MCF 10A (cell line): ENCODE measurements at regions of chr5 and their contacts with region 1.

Region 1: DNA sequence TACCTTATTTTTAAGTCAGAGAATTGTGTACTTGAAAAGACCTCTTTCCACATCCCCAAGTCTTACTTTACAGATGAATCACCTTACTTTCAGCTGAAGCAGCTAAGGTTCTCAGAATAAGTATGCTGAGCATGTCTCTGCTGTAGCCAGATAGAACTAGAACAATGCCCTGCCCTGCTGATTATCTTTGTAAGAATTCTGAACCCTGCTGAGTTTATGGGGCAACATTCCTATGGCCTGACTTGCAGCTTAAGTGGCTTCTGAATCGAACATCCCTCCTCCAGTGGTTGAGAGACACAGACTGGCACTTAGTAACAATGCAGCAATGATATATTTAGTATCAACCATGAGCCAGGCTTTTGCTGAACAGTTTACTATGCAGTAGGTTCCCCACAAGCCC is 592.0 kb upstream of the WWC1 start:
- DNase-seq: peak; percentile 98
- H3K4me3 Mint-ChIP-seq: peak overlapping the region; percentile 42
- H3K27ac Mint-ChIP-seq: peak overlapping the region; percentile 98
- H3K4me1 Mint-ChIP-seq: peaks cover 36% of the 10 kb centered on the region
- H3K27me3 Mint-ChIP-seq: no peaks in the 10 kb centered on the region
- CTCF ChIP-seq: no peak

Region 2: GRCh38 chr5:167582283-167582682 is 117.2 kb before region 1 on chr5:
- CTCF ChIA-PET with region 1: interaction called, 6 read pairs
- POLR2A ChIA-PET with region 1: no interaction called
- intact Hi-C with region 1: loop called (anchors 2 kb)
- DNase-seq: peak; percentile 52
- H3K4me3 Mint-ChIP-seq: no peak overlapping the region
- H3K27ac Mint-ChIP-seq: no peak overlapping the region
- H3K4me1 Mint-ChIP-seq: peaks cover 2% of the 10 kb centered on the region
- H3K27me3 Mint-ChIP-seq: peaks cover 33% of the 10 kb centered on the region
- CTCF ChIP-seq: peak; percentile 68

Region 3: GRCh38 chr5:167642779-167643517 is 56.5 kb before region 1 on chr5:
- CTCF ChIA-PET with region 1: interaction called, 3 read pairs
- POLR2A ChIA-PET with region 1: interaction called, 24 read pairs
- intact Hi-C with region 1: loop called (anchors 1 kb)
- DNase-seq: peak; percentile 86
- H3K4me3 Mint-ChIP-seq: no peak overlapping the region
- H3K27ac Mint-ChIP-seq: peak overlapping the region; percentile 70
- H3K4me1 Mint-ChIP-seq: peaks cover 43% of the 10 kb centered on the region
- H3K27me3 Mint-ChIP-seq: no peaks in the 10 kb centered on the region
- CTCF ChIP-seq: no peak

Region 4: DNA sequence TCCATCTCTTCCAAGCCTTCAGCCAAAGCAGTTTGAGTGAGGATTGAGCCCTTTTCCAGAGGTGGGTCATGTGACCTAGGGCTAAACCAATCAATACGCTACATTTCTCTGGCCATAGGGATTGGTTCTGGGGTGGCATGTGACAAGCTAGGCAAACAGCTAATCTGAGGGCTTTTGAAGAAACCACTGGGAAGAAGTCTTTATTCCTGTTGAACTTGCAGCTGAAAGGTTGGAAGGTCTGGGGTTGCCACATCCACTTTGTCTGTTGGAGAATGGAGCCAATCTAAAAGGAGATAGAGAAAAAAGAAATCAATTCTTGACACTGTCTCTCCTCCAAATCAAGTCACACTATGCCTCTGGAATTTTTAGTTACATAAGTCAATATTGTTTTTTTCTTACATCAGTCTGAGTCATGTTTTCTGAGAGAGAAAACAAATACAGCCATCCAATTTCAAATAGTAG is 45.8 kb before region 1 on chr5:
- CTCF ChIA-PET with region 1: interaction called, 5 read pairs
- POLR2A ChIA-PET with region 1: interaction called, 16 read pairs
- intact Hi-C with region 1: no loop called
- DNase-seq: peak; percentile 69
- H3K4me3 Mint-ChIP-seq: no peak overlapping the region
- H3K27ac Mint-ChIP-seq: peak overlapping the region; percentile 20
- H3K4me1 Mint-ChIP-seq: peaks cover 27% of the 10 kb centered on the region
- H3K27me3 Mint-ChIP-seq: no peaks in the 10 kb centered on the region
- CTCF ChIP-seq: no peak

Region 5: DNA sequence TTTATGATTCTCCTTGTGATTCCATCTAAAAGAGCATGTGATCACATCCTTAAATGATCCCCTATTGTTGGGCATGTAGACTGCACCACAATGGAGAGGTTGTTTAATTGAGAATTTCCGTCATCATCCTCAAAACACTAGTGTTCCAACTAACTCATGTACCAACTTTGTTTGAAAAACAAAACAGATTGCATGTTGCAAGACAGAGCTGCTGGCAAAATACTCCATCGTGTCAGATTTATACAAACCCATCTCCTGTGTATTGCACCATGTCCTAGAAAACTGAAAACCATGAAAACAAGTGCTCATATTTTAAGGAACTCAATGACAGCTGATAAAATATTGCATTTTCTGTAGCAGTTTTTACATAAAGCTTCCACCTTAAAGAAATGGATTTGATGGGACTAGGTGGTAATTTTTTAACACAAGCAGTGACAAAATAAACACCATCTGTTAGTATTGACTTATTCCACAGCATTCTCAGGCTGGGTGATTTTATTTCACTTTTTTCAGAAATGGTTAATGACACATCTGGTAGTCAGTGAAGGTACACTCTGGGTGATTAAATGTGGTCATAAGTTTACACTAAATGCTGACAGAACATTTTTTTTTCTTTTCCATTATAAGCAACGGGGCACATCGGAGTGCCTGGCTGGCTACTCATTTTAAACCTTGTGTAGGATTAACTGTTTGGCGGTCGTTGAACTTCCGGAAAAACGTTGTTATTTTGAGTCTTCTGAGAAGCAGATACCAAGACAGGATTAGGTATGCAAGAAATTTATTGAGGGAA is 10.9 kb before region 1 on chr5:
- CTCF ChIA-PET with region 1: interaction called, 6 read pairs
- POLR2A ChIA-PET with region 1: interaction called, 16 read pairs
- intact Hi-C with region 1: no loop called
- DNase-seq: peak; percentile 75
- H3K4me3 Mint-ChIP-seq: peak overlapping the region; percentile 63
- H3K27ac Mint-ChIP-seq: peak overlapping the region; percentile 97
- H3K4me1 Mint-ChIP-seq: peaks cover 36% of the 10 kb centered on the region
- H3K27me3 Mint-ChIP-seq: no peaks in the 10 kb centered on the region
- CTCF ChIP-seq: no peak

Region 6: GRCh38 chr5:167709625-167710024 is 10.2 kb after region 1 on chr5:
- CTCF ChIA-PET with region 1: interaction called, 3 read pairs
- POLR2A ChIA-PET with region 1: interaction called, 11 read pairs
- intact Hi-C with region 1: no loop called
- DNase-seq: no peak
- H3K4me3 Mint-ChIP-seq: no peak overlapping the region
- H3K27ac Mint-ChIP-seq: no peak overlapping the region
- H3K4me1 Mint-ChIP-seq: peaks cover 10% of the 10 kb centered on the region
- H3K27me3 Mint-ChIP-seq: no peaks in the 10 kb centered on the region
- CTCF ChIP-seq: no peak

Region 7: DNA sequence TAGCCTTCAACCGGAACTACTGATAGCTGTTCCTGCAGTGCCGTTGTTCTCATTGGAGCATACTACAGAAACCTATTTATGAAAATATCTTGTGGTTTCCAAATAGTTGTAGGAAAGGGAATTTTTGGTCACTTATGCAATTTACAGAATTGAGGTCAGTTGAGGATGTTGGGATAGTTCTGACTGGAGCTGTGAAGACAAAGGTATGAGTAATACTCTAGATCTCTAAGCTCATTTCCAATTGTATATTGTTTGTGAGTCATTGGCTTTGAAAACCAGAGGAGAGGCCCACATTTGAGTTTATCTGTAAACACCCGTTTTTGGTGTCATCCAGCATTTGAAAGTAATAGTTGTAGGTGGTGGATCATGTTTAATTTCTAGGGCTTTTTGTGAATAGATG is 30.7 kb after region 1 on chr5:
- CTCF ChIA-PET with region 1: no interaction called
- POLR2A ChIA-PET with region 1: interaction called, 14 read pairs
- intact Hi-C with region 1: no loop called
- DNase-seq: peak; percentile 94
- H3K4me3 Mint-ChIP-seq: no peak overlapping the region
- H3K27ac Mint-ChIP-seq: peak overlapping the region; percentile 32
- H3K4me1 Mint-ChIP-seq: peaks cover 15% of the 10 kb centered on the region
- H3K27me3 Mint-ChIP-seq: no peaks in the 10 kb centered on the region
- CTCF ChIP-seq: no peak